ENCODE measurements at regions of chr6 and their contacts with region 1.

Region 1: GRCh38 chr6:169839898-169840631 is 88.6 kb downstream of the ERMARD start:
- DNase-seq: peak in 1 of 5 donors; percentile 55
- ATAC-seq: peak in 1 of 4 donors; percentile 34
- H3K4me3 ChIP-seq: no peak overlapping the region
- H3K27ac ChIP-seq: no peak overlapping the region
- H3K4me1 ChIP-seq: peaks cover 0 to 9% (median 0%) of the 10 kb centered on the region in 12 donors
- H3K27me3 ChIP-seq: peaks cover 0 to 15% (median 0%) of the 10 kb centered on the region in 9 donors
- CTCF ChIP-seq: no peak
- POLR2A ChIP-seq: no peak

Region 2: DNA sequence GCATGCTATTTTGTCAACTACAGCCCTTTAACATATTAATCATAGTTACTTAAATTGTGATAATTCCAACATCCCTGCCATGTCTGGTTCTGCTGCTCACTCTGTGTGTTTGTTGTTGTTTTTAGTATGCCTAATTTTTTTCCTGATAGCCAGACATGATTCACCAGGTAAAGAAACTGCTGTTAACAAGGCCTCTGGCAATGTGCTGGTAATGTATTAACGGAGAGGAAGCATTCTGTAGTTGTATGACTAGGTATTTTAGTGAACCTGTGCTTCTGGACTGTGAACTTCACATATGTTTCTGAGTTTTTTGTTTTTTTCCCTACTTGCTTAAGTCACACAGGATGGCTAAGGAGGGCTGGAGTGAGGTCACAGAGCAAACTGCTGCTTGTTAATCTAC is 93.5 kb before region 1 on chr6:
- intact Hi-C with region 1: no loop called
- DNase-seq: no peak
- ATAC-seq: no peak
- H3K4me3 ChIP-seq: no peak overlapping the region
- H3K27ac ChIP-seq: no peak overlapping the region
- H3K4me1 ChIP-seq: peaks cover 0 to 16% (median 9%) of the 10 kb centered on the region in 12 donors
- H3K27me3 ChIP-seq: no peaks in the 10 kb centered on the region
- CTCF ChIP-seq: no peak
- POLR2A ChIP-seq: no peak

Region 3: DNA sequence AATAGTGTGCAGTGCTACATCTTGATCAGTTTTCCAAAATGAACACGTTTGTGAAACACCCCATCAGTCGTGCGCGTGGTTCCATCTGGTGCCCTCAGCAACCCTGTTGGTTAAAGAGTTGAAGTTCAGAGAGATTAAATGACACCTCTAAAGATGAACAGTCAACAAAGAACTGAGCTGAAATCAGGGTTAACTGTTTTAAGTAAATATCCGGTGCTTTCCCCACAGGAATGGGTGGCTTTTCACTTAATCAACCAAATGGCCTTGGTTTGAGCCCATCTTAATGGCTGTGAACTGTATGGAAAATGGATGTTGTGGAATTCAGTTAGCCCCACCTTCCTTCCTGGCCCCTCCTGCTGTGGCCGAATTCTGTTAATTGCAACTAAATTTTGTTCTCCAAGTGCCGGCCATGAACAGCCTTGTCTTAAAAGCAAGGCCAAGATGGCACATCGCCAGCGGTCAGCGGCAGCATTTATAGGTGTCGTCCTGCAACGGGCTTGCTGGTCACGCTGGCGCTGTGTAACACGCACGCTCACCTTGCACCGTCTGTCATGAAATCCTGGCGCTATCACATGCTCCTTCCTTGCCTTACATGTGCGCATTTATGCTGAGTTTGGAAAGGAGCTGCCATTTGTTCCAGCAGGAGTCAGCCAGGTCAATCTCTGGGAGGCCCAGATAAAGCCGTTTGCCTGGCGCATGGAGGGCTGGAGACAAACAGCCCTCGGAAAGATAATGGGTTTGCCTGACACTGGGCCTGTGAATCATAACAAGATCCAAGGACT is 75.9 kb after region 1 on chr6:
- intact Hi-C with region 1: loop called in 1 of 10 experiments (anchors 10 kb)
- DNase-seq: no peak
- ATAC-seq: peak in 3 of 4 donors; percentile 43 to 66 (median 46)
- H3K4me3 ChIP-seq: no peak overlapping the region
- H3K27ac ChIP-seq: no peak overlapping the region
- H3K4me1 ChIP-seq: peaks cover 0 to 17% (median 2%) of the 10 kb centered on the region in 12 donors
- H3K27me3 ChIP-seq: peaks cover 0 to 3% (median 0%) of the 10 kb centered on the region in 9 donors
- CTCF ChIP-seq: no peak
- POLR2A ChIP-seq: no peak

Region 4: GRCh38 chr6:169933839-169934698 is 94.0 kb after region 1 on chr6:
- intact Hi-C with region 1: loop called in 2 of 10 experiments (anchors 5 to 10 kb)
- DNase-seq: peak; percentile 62 to 79 (median 64)
- ATAC-seq: peak; percentile 65 to 92 (median 79)
- H3K4me3 ChIP-seq: no peak overlapping the region
- H3K27ac ChIP-seq: peak overlapping the region in 1 of 12 donors; percentile 46
- H3K4me1 ChIP-seq: peaks cover 0 to 17% (median 4%) of the 10 kb centered on the region in 12 donors
- H3K27me3 ChIP-seq: peaks cover 0 to 30% (median 6%) of the 10 kb centered on the region in 9 donors
- CTCF ChIP-seq: no peak
- POLR2A ChIP-seq: no peak